Activated CD4-positive, alpha-beta memory T cell treated with anti-CD3 and anti-CD28 coated beads for 36 hours (primary cell): ENCODE measurements at regions of chr2 and their contacts with region 1.

Region 1: GRCh38 chr2:98731041-98731893 is at the start of gene MGAT4A:
- DNase-seq: peak; percentile 85
- H3K4me3 Mint-ChIP-seq: peak within 1 kb of the TSS; percentile 90
- H3K27ac Mint-ChIP-seq: peak within 1 kb of the TSS; percentile 90
- H3K4me1 Mint-ChIP-seq: peaks cover 61% of the 10 kb centered on the region
- H3K27me3 Mint-ChIP-seq: no peaks in the 10 kb centered on the region
- total RNA-seq, gene MGAT4A: 71.9 to 76.7 TPM

Region 2: DNA sequence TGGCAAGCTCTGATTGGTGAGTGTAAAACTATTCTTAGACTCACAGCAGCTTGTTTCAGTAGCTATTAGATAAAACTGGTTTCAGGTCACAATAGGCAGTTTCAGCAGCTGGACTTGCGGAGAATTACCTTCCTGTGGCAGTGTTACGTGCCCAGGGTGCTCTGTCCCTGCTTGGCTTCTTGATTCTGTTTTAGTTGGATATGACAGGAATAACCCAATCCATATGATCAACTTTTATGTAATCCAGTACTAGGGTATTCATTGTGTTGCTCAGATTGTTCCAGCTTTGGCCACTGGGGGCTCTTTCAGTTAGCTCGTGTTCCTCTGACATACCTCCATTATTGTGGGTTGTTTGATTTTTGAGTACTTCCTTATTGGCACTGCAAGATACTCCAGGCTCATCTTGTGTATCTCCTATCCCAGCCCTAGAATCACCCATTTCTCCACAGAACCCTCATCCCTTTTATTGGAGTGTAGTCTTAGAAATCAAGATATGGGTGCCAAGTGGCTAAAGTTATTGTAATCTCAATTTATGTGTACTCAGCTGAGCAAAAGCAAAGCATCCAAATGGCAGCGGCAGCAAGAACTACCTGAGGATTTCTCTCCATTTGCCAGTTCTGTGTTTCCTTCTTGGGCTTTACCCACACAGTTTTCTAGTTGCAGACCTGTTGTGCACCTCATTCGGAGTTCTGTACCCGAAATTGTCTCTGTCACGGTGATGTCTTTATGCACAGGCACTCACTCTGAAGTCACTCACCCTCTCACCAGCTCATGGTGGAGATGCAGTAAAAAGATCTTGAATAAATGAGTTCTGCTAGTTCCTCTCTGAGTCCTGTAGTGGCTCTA is 243.2 kb before region 1 on chr2:
- CTCF ChIA-PET with region 1: no interaction called
- POLR2A ChIA-PET with region 1: no interaction called
- intact Hi-C with region 1: no loop called
- DNase-seq: peak; percentile 62
- H3K4me3 Mint-ChIP-seq: no peak overlapping the region
- H3K27ac Mint-ChIP-seq: no peak overlapping the region
- H3K4me1 Mint-ChIP-seq: peaks cover 87% of the 10 kb centered on the region
- H3K27me3 Mint-ChIP-seq: no peaks in the 10 kb centered on the region

Region 3: DNA sequence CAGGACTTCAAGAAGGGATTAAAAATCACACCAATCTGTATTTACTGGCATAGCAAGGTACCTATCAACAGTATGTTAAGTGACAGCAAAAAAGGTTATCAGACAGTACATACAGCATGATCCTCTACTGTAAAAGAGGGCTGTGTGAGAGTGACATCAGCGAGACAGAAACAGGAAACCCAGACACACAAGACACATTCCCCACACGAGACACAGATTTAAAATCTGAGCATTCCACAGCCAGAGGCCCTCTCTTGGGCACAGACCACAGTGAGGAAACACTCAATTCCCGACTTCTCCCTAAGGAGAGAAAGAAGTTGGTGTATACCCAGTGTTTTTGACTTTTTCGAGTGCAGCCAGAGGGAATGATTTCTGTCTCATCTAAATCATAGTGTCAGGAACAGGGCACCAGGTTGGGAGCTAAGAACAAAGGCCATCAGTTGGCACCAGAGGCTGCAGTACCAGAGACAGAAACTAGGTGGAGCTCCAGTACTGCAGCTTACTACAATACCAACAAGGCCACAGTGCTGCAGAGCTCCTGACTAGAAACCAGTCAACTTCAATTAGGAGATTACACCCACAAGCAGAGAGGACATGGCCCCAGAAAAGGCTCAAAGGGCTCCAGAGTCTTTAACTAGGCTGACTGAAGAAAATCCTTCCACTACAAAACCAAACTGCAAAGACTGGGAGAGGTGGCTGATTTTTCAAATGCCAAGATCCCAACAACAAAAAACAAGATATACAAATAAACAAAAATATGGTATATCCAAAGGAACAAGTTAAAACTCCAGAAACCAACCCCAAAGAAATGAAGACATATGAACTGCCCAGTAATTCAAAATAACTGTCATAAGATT is 81.9 kb before region 1 on chr2:
- CTCF ChIA-PET with region 1: interaction called, 34 read pairs
- POLR2A ChIA-PET with region 1: interaction called, 4 read pairs
- intact Hi-C with region 1: no loop called
- DNase-seq: peak; percentile 87
- H3K4me3 Mint-ChIP-seq: no peak overlapping the region
- H3K27ac Mint-ChIP-seq: peak overlapping the region; percentile 74
- H3K4me1 Mint-ChIP-seq: peaks cover 52% of the 10 kb centered on the region
- H3K27me3 Mint-ChIP-seq: no peaks in the 10 kb centered on the region

Region 4: DNA sequence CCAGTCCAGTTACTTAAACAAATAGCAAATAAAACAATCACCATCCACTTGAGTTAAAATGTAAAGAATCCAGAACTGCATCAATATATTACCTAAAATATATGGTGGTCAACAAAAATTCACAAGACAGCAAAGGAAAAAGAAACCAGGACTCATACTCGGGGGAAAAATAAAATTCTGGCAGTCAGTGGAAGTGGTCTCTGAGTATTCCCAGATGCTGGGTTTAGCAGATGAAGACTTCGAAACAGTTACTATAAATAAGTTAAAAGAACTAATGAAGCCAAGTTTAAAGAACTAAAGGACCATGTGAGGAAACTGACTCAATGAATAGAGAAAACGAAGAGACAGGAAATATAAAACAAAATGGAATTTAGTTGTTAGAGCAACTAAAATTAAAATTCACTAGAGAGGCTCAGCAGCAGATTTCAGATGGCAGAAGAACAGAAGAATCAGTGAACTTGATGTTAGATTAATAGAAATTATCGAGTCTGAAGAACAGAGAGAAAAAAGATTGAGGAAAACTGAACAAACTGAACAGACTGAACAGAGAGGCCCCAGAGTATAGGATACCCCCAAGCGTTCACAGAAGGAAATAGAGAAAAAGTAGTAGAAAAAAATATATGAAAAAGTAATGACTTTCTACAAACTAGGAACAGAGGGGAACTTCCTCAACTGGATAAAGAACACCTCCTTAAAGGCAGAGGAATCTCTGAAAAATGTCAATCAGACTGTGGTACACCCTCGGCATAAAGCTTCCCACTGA is 28.2 kb before region 1 on chr2:
- CTCF ChIA-PET with region 1: no interaction called
- POLR2A ChIA-PET with region 1: no interaction called
- intact Hi-C with region 1: no loop called
- DNase-seq: no peak
- H3K4me3 Mint-ChIP-seq: no peak overlapping the region
- H3K27ac Mint-ChIP-seq: peak overlapping the region; percentile 66
- H3K4me1 Mint-ChIP-seq: peaks cover 70% of the 10 kb centered on the region
- H3K27me3 Mint-ChIP-seq: no peaks in the 10 kb centered on the region

Region 5: GRCh38 chr2:98713332-98714015 is 17.8 kb before region 1 on chr2:
- CTCF ChIA-PET with region 1: interaction called, 5 read pairs
- POLR2A ChIA-PET with region 1: interaction called, 8 read pairs
- intact Hi-C with region 1: loop called (anchors 1 kb)
- DNase-seq: no peak
- H3K4me3 Mint-ChIP-seq: no peak overlapping the region
- H3K27ac Mint-ChIP-seq: peak overlapping the region; percentile 24
- H3K4me1 Mint-ChIP-seq: peaks cover 88% of the 10 kb centered on the region
- H3K27me3 Mint-ChIP-seq: no peaks in the 10 kb centered on the region

Region 6: DNA sequence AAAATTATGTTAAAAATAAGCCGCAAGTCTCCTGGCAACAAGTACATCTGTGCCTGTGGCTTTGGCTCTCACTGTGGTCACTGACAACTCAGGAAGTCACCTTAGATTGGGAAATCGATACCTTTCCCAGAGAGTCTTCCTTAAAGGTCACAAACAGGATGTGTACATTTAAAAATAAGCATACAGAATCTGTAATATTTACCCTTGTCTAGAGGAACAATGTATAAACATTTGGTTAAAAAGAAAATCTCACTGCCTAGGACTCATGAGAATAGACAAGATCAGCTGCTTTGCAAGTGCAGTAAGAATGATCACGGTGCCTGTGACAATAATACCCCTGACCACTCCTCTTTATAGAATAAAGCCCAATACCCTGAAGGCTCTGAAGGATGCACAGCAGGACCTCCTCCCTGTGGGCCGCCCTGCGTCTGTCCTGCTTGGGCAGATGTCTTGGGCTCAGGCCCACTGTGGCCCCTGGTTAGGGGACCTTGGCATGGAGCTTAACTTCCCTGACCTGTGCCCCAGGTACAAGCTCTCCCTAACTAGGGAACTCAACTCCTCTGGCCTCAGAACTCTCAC is 97.6 kb after region 1 on chr2:
- CTCF ChIA-PET with region 1: interaction called, 15 read pairs
- POLR2A ChIA-PET with region 1: no interaction called
- intact Hi-C with region 1: no loop called
- DNase-seq: peak; percentile 25
- H3K4me3 Mint-ChIP-seq: no peak overlapping the region
- H3K27ac Mint-ChIP-seq: peak overlapping the region; percentile 43
- H3K4me1 Mint-ChIP-seq: peaks cover 47% of the 10 kb centered on the region
- H3K27me3 Mint-ChIP-seq: no peaks in the 10 kb centered on the region

Region 7: DNA sequence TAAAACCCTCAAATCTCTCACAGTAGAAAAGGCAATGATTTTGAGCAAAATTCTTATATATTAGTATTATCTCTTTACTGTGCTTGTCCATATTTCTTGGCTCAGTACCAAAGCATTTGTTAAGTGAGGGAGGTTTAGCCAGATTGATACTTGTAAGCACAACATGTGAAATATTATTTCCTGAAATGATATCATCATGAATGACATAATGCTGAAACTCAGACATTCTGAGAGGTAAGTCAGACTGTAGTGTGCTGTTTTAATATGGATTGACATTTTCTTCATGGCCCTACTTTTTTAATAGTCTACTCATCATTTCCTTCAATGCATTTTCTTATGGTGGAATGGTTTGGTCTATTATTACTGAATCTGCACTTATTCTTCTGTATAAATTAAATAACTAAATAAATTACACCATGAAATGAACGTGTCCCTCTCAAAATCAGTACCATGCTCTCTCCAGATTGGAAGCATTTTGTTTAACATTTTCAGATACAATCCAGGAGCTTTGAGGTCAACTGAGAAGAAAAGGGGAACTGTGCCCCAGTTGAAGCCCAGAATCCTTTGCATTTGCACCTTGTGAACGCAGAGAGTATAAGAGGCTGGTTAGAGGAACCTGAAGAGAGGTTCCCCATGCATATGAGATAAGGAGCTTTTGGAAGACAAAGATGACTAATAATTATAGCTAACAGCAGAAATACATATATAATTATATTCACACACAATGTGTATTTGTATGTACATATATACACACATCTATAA is 254.8 kb after region 1 on chr2:
- CTCF ChIA-PET with region 1: no interaction called
- POLR2A ChIA-PET with region 1: no interaction called
- intact Hi-C with region 1: no loop called
- DNase-seq: no peak
- H3K4me3 Mint-ChIP-seq: no peak overlapping the region
- H3K27ac Mint-ChIP-seq: no peak overlapping the region
- H3K4me1 Mint-ChIP-seq: no peaks in the 10 kb centered on the region
- H3K27me3 Mint-ChIP-seq: peaks cover 1% of the 10 kb centered on the region

Region 8: DNA sequence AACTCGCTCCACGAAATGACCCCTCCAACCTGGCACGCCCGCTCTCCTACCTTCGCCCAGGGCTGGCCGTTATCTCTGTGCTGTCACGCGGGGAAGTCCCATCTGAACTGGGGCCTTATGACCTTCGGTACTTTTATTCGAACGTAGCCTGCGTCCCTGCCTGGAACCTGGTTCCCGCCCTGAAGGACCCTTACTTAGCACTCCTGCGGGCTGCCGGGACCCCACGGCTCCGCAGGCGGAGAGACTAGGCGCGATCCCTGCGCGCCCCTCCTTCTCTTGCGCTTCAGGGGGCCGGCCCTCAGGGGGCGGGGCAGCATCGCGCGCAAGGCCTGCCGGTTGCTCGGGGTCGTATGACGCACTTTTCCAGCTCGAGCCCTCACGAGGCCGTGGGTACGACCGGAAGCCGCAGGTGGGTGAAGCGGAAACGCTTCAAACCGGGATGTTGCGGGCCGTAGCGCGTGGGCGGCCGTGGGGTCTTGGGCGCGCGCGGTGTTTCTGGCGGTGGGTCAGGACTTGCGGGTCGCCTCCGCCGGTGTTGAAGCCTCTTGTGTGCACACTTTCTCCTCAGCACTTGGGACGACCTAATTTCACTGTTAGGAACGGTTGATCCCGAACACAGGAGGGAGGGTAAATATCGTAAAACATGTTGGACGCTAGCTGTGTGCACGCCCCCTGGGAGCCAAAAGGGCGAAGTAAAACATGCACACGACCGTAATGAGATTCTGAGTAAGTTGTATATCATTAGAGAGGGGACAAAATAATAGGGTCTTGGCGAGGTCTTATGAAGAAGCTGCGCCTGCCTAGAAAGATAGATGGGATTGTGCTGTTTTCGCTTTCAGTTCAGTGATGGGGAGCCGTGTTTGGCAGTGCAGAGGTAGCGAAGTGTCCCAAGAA is 423.6 kb after region 1 on chr2 and contains the starts of genes LIPT1 and TSGA10:
- CTCF ChIA-PET with region 1: no interaction called
- POLR2A ChIA-PET with region 1: no interaction called
- intact Hi-C with region 1: loop called (anchors 10 kb)
- DNase-seq: peak; percentile 96
- H3K4me3 Mint-ChIP-seq: no peak within 1 kb of the TSS
- H3K27ac Mint-ChIP-seq: peak within 1 kb of the TSS; percentile 91
- H3K4me1 Mint-ChIP-seq: peaks cover 24% of the 10 kb centered on the region
- H3K27me3 Mint-ChIP-seq: no peaks in the 10 kb centered on the region
- total RNA-seq, gene LIPT1: 3.3 to 4.6 TPM
- total RNA-seq, gene TSGA10: 6.3 to 7.0 TPM